MCF 10A (cell line): ENCODE measurements at regions of chr2 and their contacts with region 1.

Region 1: GRCh38 chr2:55168221-55169154 is 63.6 kb downstream of the CLHC1 start:
- DNase-seq: peak; percentile 72
- H3K4me3 Mint-ChIP-seq: no peak overlapping the region
- H3K27ac Mint-ChIP-seq: no peak overlapping the region
- H3K4me1 Mint-ChIP-seq: peaks cover 13% of the 10 kb centered on the region
- H3K27me3 Mint-ChIP-seq: no peaks in the 10 kb centered on the region
- CTCF ChIP-seq: peak; percentile 81

Region 2: DNA sequence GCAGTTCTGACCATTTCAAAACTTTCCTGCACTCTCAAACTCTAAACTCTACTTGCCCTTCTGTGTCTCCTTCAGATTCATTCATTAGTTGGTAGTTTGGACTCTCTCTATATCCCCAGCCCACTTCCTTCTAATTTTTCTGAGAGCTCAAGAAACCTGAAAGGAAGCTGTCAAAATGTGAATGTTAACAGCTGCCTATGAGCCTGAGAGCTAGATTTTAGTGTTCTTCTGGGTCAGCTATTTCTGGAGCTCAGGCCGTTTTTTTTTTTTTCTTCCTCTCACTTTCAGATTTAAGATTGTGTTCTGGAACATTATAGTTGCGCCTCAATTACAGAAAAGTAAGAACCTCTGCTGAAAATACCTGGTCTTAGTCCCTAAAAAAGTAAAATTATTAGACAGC is 191.3 kb before region 1 on chr2:
- CTCF ChIA-PET with region 1: interaction called, 11 read pairs
- POLR2A ChIA-PET with region 1: no interaction called
- intact Hi-C with region 1: no loop called
- DNase-seq: no peak
- H3K4me3 Mint-ChIP-seq: no peak overlapping the region
- H3K27ac Mint-ChIP-seq: no peak overlapping the region
- H3K4me1 Mint-ChIP-seq: peaks cover 21% of the 10 kb centered on the region
- H3K27me3 Mint-ChIP-seq: no peaks in the 10 kb centered on the region
- CTCF ChIP-seq: no peak

Region 3: GRCh38 chr2:55026202-55026601 is 142.3 kb before region 1 on chr2:
- CTCF ChIA-PET with region 1: interaction called, 169 read pairs
- POLR2A ChIA-PET with region 1: no interaction called
- intact Hi-C with region 1: no loop called
- DNase-seq: peak; percentile 57
- H3K4me3 Mint-ChIP-seq: no peak overlapping the region
- H3K27ac Mint-ChIP-seq: no peak overlapping the region
- H3K4me1 Mint-ChIP-seq: peaks cover 7% of the 10 kb centered on the region
- H3K27me3 Mint-ChIP-seq: no peaks in the 10 kb centered on the region
- CTCF ChIP-seq: no peak

Region 4: GRCh38 chr2:55057496-55057895 is 111.0 kb before region 1 on chr2:
- CTCF ChIA-PET with region 1: interaction called, 100 read pairs
- POLR2A ChIA-PET with region 1: interaction called, 104 read pairs
- intact Hi-C with region 1: no loop called
- DNase-seq: no peak
- H3K4me3 Mint-ChIP-seq: no peak overlapping the region
- H3K27ac Mint-ChIP-seq: no peak overlapping the region
- H3K4me1 Mint-ChIP-seq: peaks cover 7% of the 10 kb centered on the region
- H3K27me3 Mint-ChIP-seq: no peaks in the 10 kb centered on the region
- CTCF ChIP-seq: no peak

Region 5: DNA sequence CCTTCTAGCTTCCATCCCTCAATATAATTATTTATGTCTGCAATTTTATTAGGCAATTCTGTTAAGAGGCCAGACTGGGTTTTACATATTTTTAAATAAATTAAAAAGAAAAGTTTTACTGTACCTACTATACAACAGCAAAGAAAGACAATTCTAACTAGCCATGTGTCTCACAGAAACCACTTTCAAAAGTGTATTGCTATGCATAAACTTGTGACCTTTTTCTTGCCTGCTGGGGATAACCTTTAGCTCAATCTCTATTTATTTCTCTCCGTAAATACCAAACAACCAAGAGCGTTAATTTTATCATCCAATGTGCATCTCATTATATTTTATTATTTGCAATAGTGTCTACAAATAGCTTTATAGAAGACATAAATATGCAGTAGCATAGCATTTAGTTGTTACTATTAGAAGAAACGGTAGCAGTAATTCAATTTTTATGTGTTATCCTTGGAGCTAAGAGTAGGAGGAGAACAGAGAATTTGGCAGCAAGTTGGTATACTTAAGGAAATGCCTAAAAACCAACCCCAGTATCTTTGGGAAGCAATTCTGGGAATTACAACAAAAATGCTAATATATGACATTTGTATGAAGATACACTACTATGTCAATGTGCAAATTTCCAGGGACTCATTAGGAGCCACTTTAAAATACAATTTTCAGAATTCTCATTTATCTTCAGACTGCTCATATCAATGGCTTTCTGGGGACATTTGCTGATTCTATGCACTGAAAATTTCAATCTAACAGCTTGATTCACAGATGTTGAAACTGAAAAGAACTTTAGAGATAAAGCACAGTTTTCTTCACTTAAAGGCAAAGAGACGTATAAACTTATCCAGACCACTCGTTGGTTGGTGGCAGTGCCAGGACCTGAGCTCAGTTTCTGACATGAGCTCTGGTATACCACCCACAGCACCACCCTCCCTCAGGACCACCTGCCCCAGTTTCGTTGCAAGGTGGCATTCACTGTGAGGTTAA is 95.2 kb before region 1 on chr2:
- CTCF ChIA-PET with region 1: interaction called, 3 read pairs
- POLR2A ChIA-PET with region 1: no interaction called
- intact Hi-C with region 1: loop called (anchors 5 kb)
- DNase-seq: no peak
- H3K4me3 Mint-ChIP-seq: no peak overlapping the region
- H3K27ac Mint-ChIP-seq: no peak overlapping the region
- H3K4me1 Mint-ChIP-seq: no peaks in the 10 kb centered on the region
- H3K27me3 Mint-ChIP-seq: no peaks in the 10 kb centered on the region
- CTCF ChIP-seq: no peak

Region 6: DNA sequence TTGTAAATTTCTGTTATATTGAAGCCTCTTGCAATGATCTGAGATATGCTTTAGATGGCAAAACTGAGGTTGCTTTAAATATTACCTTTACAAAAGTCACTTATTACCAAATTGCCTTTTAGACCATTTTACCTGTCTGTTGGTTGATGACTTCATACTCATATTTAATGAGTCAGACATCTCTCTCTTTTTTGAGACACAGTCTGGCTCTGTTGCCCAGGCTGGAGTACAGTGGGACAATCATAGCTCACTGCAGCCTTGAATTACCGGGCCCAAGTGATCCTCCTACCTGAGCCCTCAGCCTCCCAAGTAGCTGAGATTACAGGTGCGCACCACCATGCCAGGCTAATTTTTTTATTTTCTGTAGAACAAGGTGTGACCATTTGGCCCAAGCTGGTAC is 460.4 kb after region 1 on chr2:
- CTCF ChIA-PET with region 1: no interaction called
- POLR2A ChIA-PET with region 1: no interaction called
- intact Hi-C with region 1: no loop called
- DNase-seq: no peak
- H3K4me3 Mint-ChIP-seq: no peak overlapping the region
- H3K27ac Mint-ChIP-seq: no peak overlapping the region
- H3K4me1 Mint-ChIP-seq: peaks cover 6% of the 10 kb centered on the region
- H3K27me3 Mint-ChIP-seq: no peaks in the 10 kb centered on the region
- CTCF ChIP-seq: no peak